ENCODE measurements at regions of chr4 and their contacts with region 1.

Region 1: DNA sequence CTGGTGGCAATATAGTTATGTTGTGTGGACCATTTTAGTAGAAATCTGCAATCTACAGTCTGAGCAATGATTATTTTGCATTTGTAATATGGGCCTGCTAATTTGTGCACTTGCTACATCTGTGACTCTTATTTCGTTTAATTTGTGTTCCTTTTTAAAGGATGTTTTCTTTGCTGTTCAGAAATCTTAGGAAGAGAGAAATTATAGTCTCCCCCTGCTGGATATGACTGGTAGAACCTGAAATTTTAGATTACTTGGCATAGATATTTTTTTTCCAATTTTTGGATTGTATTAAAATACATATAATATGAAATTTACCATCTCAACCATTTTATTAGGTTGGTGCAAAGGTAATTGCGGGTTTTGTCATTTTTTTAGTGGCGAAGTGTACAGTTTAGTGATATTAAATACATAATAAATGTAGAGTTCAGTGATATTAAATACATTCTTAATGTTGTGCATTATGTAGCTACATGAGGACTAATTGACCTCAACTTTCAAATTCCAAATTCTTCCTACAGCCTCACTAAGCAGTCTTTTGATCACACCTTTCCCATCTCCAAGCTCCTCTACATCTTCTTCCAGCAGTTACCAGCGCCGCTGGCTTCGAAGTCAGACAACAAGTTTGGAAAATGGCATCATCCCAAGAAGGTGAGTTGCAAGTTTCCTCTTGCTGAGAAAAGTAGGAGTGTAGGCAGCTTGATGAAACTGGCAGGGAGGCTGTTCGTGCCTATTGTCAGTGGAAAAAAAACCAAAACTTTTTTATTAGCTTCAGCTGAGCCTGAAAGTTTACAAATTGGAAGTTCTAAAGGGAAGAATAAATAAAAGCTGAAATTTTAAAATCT is 82.2 kb downstream of the FNIP2 start:
- DNase-seq: no peak
- H3K4me3 ChIP-seq: no peak overlapping the region
- H3K27ac ChIP-seq: peak overlapping the region in 48 of 59 donors; percentile 0 to 74 (median 45)
- H3K27me3 ChIP-seq: no peaks in the 10 kb centered on the region
- CTCF ChIP-seq: peak; percentile 65 to 96 (median 84)

Region 2: DNA sequence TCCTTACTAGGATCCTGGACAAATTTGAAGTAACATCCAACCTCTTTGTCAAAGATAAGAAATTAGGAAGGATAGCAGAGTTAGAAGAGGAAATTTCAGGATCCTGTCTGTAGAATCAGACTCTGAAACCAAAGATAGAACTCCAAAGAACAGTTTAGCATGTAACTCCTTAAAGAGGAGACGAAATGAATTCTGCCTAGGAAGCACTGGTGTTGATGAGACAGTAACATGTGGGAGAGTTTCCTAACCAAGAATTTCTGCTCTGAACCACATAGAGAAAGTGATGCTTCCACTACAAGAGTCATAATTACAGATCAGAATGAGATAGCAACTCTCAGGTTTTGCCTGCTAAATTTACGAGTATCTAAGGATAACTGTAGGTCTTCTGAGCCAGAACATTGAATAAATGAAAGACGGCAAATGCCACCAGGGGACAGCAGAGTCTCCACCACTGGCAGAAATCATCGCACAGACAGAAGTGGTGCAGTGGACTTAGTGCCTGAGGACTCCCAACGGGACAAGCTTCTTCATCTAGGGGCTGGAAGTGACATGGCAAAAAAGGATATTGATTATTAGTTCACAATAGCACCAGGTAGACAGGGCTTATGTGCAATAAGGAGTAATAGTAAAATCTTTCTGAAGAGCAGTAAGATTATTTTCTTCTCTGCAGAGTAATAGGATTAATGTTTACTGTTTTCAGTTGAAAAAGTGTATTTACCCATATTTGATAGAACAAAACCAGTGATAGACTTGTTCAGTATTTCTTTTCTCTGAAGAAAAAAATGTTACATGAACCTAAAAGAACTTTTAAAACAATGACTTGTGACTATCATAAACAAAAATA is 121.1 kb before region 1 on chr4:
- intact Hi-C with region 1: loop called (anchors 2 kb)
- DNase-seq: peak; percentile 44 to 87 (median 68)
- H3K4me3 ChIP-seq: peak overlapping the region in 1 of 59 donors; percentile 1
- H3K27ac ChIP-seq: peak overlapping the region in 1 of 59 donors; percentile 28
- H3K27me3 ChIP-seq: no peaks in the 10 kb centered on the region
- CTCF ChIP-seq: peak; percentile 66 to 98 (median 91)

Region 3: DNA sequence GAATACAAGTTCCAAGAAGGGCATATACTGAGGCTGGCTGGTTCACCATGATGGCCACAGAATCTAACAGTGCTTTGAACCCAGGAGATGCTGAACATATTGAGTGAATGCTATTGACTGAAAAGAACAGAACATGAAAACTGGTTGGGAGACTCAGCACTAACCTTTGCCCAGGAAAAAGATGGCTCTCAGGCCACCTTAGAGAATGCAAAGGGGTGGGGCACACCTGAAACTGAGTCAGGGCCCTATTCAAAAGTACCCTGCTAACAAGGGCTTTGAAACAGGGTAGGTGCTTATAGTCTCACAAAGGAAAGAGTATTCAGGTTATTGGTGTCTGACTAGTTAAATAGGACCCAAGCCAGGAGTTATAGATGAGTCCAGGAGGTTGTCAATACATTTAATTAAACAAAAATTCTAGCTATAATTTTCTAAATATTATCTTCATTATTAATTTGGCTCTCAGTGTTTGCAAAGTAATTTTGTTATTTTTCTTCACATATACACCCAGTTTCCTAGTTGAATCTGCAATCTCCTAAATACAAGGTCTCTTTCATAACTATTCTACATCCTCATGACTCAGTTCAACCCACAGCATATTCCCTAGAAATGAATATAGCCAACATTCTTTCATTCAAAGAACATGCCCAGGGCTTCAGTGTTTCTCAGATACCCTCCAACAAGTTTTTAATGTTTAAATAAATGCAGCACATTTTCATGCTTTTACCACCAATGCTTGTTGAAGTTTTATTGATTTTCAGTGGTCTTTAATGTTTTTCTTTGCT is 107.7 kb after region 1 on chr4:
- intact Hi-C with region 1: no loop called
- DNase-seq: no peak
- H3K4me3 ChIP-seq: no peak overlapping the region
- H3K27ac ChIP-seq: no peak overlapping the region
- H3K27me3 ChIP-seq: no peaks in the 10 kb centered on the region
- CTCF ChIP-seq: no peak